Tibial artery (tissue), 4 donors: ENCODE measurements at regions of chr1 and their contacts with region 1.

Region 1: GRCh38 chr1:41109316-41110197 is 88.0 kb upstream of the SLFNL1 start:
- DNase-seq: peak; percentile 59 to 77
- H3K4me3 ChIP-seq: peak overlapping the region in 1 of 2 donors; percentile 26
- H3K27ac ChIP-seq: peak overlapping the region; percentile 86 to 90
- H3K4me1 ChIP-seq: peaks cover 0 to 43% (median 27%) of the 10 kb centered on the region in 4 donors
- H3K27me3 ChIP-seq: no peaks in the 10 kb centered on the region
- CTCF ChIP-seq: no peak

Region 2: DNA sequence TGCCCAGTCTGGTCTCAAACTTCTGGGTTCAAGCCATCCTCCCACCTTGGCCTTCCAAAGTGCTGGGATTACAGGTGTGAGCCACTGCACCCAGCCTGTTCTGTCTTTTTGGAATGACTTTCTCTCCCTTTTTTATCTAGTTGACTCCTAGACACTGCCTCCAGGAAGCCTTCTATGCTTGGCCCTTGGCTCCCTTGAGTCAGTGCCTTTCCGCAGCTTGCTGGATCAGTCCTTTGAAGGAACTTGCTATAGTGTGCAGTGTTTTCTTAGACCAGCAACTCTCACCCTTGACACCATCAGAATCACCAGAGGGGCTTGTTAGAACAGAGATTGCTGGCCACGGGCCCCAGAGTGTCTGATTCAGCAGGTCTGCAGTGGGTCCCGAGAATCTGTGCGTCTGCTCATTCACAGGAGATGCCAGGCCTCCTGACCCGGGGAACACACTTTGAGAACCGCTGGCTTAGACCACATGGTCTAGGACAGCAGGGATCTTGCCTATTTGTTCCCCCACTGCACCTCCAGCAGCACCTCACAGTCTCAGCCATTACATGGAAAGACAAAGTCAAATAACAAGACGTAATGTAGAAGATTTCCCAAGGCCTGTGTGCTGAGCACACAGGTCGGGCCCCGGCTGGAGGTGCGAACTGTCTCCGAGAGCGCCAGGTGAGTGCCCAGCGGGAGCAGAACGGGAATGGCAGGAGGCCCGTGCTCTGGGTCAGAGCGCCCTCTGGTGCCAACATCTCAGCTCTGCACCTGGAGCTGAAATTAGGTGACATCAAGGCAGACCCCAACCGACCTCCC is 157.4 kb before region 1 on chr1:
- intact Hi-C with region 1: no loop called
- DNase-seq: peak; percentile 59 to 80
- H3K4me3 ChIP-seq: no peak overlapping the region
- H3K27ac ChIP-seq: no peak overlapping the region
- H3K4me1 ChIP-seq: peaks cover 0 to 19% (median 13%) of the 10 kb centered on the region in 4 donors
- H3K27me3 ChIP-seq: no peaks in the 10 kb centered on the region
- CTCF ChIP-seq: peak; percentile 92 to 94

Region 3: DNA sequence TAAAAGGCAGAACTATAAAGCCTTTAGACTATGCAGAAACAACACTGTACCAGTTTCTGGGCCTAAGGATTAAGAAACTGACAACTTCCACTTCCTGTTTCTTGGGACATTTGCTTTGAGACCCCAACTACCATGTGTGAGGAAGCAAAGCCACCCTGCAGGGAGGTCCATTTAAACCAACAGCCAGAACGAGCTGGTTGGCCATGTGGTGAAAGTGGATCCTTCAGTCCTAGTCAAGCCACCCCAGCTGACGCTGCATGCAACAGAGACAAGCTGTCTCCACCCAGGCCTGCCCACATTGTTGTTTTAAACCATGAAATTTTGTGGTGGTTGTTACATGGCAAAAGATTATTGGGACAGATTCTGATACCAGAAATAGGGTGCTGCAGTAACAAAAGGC is 56.2 kb before region 1 on chr1:
- intact Hi-C with region 1: loop called (anchors 10 kb)
- DNase-seq: peak in 1 of 2 donors; percentile 27
- H3K4me3 ChIP-seq: no peak overlapping the region
- H3K27ac ChIP-seq: no peak overlapping the region
- H3K4me1 ChIP-seq: no peaks in the 10 kb centered on the region
- H3K27me3 ChIP-seq: no peaks in the 10 kb centered on the region
- CTCF ChIP-seq: no peak